Caco-2 (cell line): ENCODE measurements at regions of chr2 and their contacts with region 1.

Region 1: GRCh38 chr2:28681158-28681571 is 70.5 kb upstream of the PPP1CB start:
- DNase-seq: no peak
- H3K4me3 ChIP-seq: no peak overlapping the region
- H3K4me3 Mint-ChIP-seq: no peak overlapping the region
- H3K27ac Mint-ChIP-seq: no peak overlapping the region
- H3K4me1 ChIP-seq: peaks cover 38% of the 10 kb centered on the region
- H3K4me1 Mint-ChIP-seq: peaks cover 50% of the 10 kb centered on the region
- H3K27me3 ChIP-seq: no peaks in the 10 kb centered on the region
- H3K27me3 Mint-ChIP-seq: no peaks in the 10 kb centered on the region
- CTCF ChIP-seq: no peak

Region 2: GRCh38 chr2:28356095-28356911 is 324.9 kb before region 1 on chr2:
- CTCF ChIA-PET with region 1: no interaction called
- POLR2A ChIA-PET with region 1: no interaction called
- intact Hi-C with region 1: no loop called
- DNase-seq: no peak
- H3K4me3 ChIP-seq: no peak overlapping the region
- H3K4me3 Mint-ChIP-seq: no peak overlapping the region
- H3K27ac Mint-ChIP-seq: no peak overlapping the region
- H3K4me1 ChIP-seq: peaks cover 10% of the 10 kb centered on the region; the same call in 1 of the 2 replicates
- H3K4me1 Mint-ChIP-seq: peaks cover 7% of the 10 kb centered on the region
- H3K27me3 ChIP-seq: no peaks in the 10 kb centered on the region
- H3K27me3 Mint-ChIP-seq: no peaks in the 10 kb centered on the region
- CTCF ChIP-seq: no peak

Region 3: DNA sequence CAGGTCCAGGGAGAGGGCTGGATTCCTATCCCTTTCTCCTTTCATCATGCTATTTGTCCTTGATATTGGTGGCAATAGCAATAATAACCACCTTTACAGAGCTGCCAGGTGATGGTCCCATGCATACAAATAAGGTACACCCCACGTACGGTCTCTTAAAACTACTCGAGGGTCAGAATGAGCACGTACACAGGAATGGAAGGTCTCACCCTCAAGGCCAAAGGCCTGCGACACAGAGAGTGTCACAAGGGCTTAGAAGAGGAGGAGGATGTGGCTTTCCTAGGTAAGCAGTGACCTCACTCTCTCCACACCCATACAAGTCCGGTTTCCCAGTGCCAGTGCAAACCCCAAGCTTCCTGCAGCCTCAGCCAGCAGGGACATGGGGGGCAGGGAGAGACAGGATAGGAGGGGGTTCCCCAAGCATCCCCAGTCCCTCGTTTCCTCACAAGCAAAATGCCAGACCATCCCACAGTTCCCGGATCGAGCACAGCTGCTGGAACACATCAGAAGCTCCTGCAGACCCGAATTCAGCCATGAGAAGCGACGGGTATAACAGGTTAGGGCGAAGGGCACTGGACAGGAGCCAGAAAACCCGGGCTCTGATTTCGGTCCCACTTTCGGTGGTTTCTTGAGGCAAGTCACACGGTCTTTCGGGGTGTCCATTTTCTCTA is 136.1 kb before region 1 on chr2:
- CTCF ChIA-PET with region 1: no interaction called
- POLR2A ChIA-PET with region 1: interaction called, 17 read pairs
- intact Hi-C with region 1: no loop called
- DNase-seq: peak; percentile 73 to 85
- H3K4me3 ChIP-seq: peak overlapping the region; percentile 3
- H3K4me3 Mint-ChIP-seq: peak overlapping the region; percentile 86
- H3K27ac Mint-ChIP-seq: peak overlapping the region; percentile 90
- H3K4me1 ChIP-seq: peaks cover 49% of the 10 kb centered on the region
- H3K4me1 Mint-ChIP-seq: peaks cover 43% of the 10 kb centered on the region
- H3K27me3 ChIP-seq: no peaks in the 10 kb centered on the region
- H3K27me3 Mint-ChIP-seq: no peaks in the 10 kb centered on the region
- CTCF ChIP-seq: no peak

Region 4: GRCh38 chr2:28633746-28634145 is 47.4 kb before region 1 on chr2:
- CTCF ChIA-PET with region 1: interaction called, 4 read pairs
- POLR2A ChIA-PET with region 1: interaction called, 3 read pairs
- intact Hi-C with region 1: loop called (anchors 5 kb)
- DNase-seq: peak; percentile 69 to 79
- H3K4me3 ChIP-seq: no peak overlapping the region
- H3K4me3 Mint-ChIP-seq: peak overlapping the region; percentile 8
- H3K27ac Mint-ChIP-seq: peak overlapping the region; percentile 68
- H3K4me1 ChIP-seq: peaks cover 34% of the 10 kb centered on the region
- H3K4me1 Mint-ChIP-seq: peaks cover 24% of the 10 kb centered on the region
- H3K27me3 ChIP-seq: no peaks in the 10 kb centered on the region
- H3K27me3 Mint-ChIP-seq: no peaks in the 10 kb centered on the region
- CTCF ChIP-seq: no peak

Region 5: GRCh38 chr2:28654978-28655320 is 26.2 kb before region 1 on chr2:
- CTCF ChIA-PET with region 1: no interaction called
- POLR2A ChIA-PET with region 1: no interaction called
- intact Hi-C with region 1: loop called (anchors 1 kb)
- DNase-seq: peak; percentile 75 to 81
- H3K4me3 ChIP-seq: no peak overlapping the region
- H3K4me3 Mint-ChIP-seq: peak overlapping the region; percentile 33
- H3K27ac Mint-ChIP-seq: peak overlapping the region; percentile 75
- H3K4me1 ChIP-seq: peaks cover 52% of the 10 kb centered on the region
- H3K4me1 Mint-ChIP-seq: peaks cover 56% of the 10 kb centered on the region
- H3K27me3 ChIP-seq: no peaks in the 10 kb centered on the region
- H3K27me3 Mint-ChIP-seq: no peaks in the 10 kb centered on the region
- CTCF ChIP-seq: no peak

Region 6: DNA sequence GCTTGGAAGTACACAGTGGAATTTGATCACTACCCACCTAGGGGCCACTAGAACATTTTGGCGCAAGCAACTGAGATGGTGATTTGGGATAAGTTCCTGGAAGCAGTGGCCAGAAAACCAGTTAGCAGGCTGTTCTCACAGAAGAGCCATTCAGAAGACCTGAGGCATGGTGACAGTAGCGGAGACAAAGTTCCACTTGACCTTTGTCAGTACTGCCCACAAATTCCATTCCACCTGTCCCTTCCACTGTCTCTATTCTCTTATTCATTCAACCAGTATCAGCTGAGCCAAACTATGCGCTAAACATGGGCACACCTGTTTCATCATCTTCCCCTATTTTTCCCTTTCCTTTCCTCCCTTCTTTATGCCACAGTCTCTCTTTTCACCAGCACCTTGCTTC is 11.2 kb after region 1 on chr2:
- CTCF ChIA-PET with region 1: no interaction called
- POLR2A ChIA-PET with region 1: no interaction called
- intact Hi-C with region 1: loop called (anchors 1 kb)
- DNase-seq: no peak
- H3K4me3 ChIP-seq: no peak overlapping the region
- H3K4me3 Mint-ChIP-seq: no peak overlapping the region
- H3K27ac Mint-ChIP-seq: peak overlapping the region; percentile 71
- H3K4me1 ChIP-seq: peaks cover 19% of the 10 kb centered on the region
- H3K4me1 Mint-ChIP-seq: peaks cover 21% of the 10 kb centered on the region
- H3K27me3 ChIP-seq: no peaks in the 10 kb centered on the region
- H3K27me3 Mint-ChIP-seq: no peaks in the 10 kb centered on the region
- CTCF ChIP-seq: no peak

Region 7: DNA sequence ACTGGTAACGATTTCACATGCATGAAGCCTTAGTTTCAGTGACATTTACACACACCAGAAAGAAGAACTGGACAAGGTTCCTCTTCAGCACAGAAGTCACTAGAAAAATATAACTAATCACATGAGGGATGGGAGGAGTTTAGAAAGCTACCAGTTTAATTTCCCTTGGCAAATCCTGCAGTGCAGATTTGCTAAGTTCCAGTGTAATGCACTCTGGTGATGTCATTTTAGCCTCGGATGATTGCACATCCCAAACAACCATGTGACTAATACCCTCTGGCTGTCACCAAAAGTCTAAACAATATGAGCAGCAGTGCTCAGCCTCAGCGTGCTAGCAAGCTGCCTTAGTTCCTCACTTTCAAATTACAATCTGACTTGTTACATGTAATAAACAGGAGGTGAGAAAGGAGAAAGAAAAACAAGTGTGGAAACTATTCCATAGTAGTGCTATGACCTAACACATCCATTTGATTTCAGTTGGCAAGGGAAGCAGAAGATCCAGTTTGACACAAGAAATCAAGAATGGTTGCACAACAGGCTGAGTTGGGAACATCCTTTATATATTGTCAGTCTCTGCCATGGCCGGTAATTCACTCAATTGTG is 35.2 kb after region 1 on chr2:
- CTCF ChIA-PET with region 1: no interaction called
- POLR2A ChIA-PET with region 1: no interaction called
- intact Hi-C with region 1: loop called (anchors 2 kb)
- DNase-seq: peak in 1 of 2 experiments; percentile 43
- H3K4me3 ChIP-seq: no peak overlapping the region
- H3K4me3 Mint-ChIP-seq: no peak overlapping the region
- H3K27ac Mint-ChIP-seq: peak overlapping the region; percentile 9
- H3K4me1 ChIP-seq: peaks cover 26% of the 10 kb centered on the region
- H3K4me1 Mint-ChIP-seq: peaks cover 29% of the 10 kb centered on the region
- H3K27me3 ChIP-seq: no peaks in the 10 kb centered on the region
- H3K27me3 Mint-ChIP-seq: no peaks in the 10 kb centered on the region
- CTCF ChIP-seq: no peak

Region 8: DNA sequence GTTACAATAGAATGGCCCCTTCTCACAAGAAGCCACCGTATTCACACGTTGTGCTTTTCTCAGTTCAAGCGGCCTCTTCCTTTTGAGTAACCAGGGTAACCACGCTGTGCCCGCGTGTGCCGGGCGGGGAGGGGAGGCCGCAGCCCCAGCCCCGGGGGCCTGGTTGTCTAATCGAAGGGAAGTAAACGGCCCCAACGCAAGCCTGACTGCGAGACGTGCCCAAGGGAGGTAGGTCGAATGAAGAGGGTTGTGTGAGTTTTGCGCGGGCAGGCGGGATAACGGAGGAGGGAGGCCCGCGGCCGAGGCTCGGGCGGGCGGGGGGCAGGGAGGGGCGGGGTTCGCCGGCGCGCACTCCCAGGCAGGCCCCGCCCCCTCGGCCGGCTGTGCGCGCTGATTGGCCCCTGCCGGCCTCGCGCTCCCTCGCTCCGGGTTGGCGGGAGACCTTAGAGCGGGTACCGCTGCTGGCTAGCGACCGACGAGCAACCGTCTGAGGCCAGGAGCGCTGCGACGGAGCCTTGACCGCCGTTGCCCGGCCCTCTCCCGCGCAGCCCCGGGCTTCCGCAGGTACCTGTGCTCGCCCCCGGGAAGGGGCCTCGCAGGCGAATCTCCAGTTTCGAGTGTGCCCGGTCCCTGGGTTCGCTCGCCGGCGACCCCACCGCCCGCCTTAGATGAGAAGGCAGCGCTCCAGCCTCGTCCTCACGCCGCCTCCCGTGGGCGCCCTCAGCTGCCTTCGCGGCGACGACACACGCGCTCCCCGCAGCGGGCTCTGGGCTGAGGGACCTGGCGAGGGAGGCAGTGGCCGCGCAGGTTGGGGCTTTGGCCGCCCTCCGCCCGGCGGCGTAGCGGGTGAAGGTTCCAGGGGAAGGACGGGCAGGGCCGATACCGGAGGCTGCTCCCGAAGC is 129.5 kb after region 1 on chr2 and contains the start of gene SPDYA:
- CTCF ChIA-PET with region 1: no interaction called
- POLR2A ChIA-PET with region 1: no interaction called
- intact Hi-C with region 1: no loop called
- DNase-seq: peak; percentile 84 to 91
- H3K4me3 ChIP-seq: peak within 1 kb of the TSS; percentile 56
- H3K4me3 Mint-ChIP-seq: peak within 1 kb of the TSS; percentile 69
- H3K27ac Mint-ChIP-seq: peak within 1 kb of the TSS; percentile 5
- H3K4me1 ChIP-seq: no peaks in the 10 kb centered on the region
- H3K4me1 Mint-ChIP-seq: no peaks in the 10 kb centered on the region
- H3K27me3 ChIP-seq: no peaks in the 10 kb centered on the region
- H3K27me3 Mint-ChIP-seq: no peaks in the 10 kb centered on the region
- CTCF ChIP-seq: no peak
- total RNA-seq, gene SPDYA: 1.5 and 2.0 TPM in 2 replicates